ENCODE measurements at regions of chr5 and their contacts with region 1.

Region 1: GRCh38 chr5:33440482-33441240 is at the start of gene TARS1:
- DNase-seq: peak; percentile 80 to 96 (median 92)
- ATAC-seq: peak; percentile 92
- H3K4me3 ChIP-seq: peak within 1 kb of the TSS; percentile 67 to 91
- H3K4me3 Mint-ChIP-seq: no peak within 1 kb of the TSS
- H3K27ac ChIP-seq: peak within 1 kb of the TSS; percentile 72 to 78
- H3K27ac Mint-ChIP-seq: no peak within 1 kb of the TSS
- H3K4me1 ChIP-seq: peaks cover 31% of the 10 kb centered on the region
- H3K4me1 Mint-ChIP-seq: peaks cover 35% of the 10 kb centered on the region
- H3K27me3 ChIP-seq: no peaks in the 10 kb centered on the region
- H3K27me3 Mint-ChIP-seq: no peaks in the 10 kb centered on the region
- CTCF ChIP-seq: no peak
- total RNA-seq, gene TARS1: 27.9 to 31.4 TPM

Region 2: GRCh38 chr5:31531888-31532710 is 1908.6 kb before region 1 on chr5 and contains the starts of genes C5orf22 and DROSHA:
- CTCF ChIA-PET with region 1: no interaction called
- POLR2A ChIA-PET with region 1: no interaction called
- intact Hi-C with region 1: loop called (anchors 2 to 5 kb)
- DNase-seq: peak; percentile 72 to 96 (median 91)
- ATAC-seq: peak; percentile 97
- H3K4me3 ChIP-seq: peak within 1 kb of the TSS; percentile 87 to 91
- H3K4me3 Mint-ChIP-seq: peak within 1 kb of the TSS; percentile 99
- H3K27ac ChIP-seq: peak within 1 kb of the TSS; percentile 63 to 75
- H3K27ac Mint-ChIP-seq: peak within 1 kb of the TSS; percentile 92
- H3K4me1 ChIP-seq: peaks cover 34% of the 10 kb centered on the region
- H3K4me1 Mint-ChIP-seq: peaks cover 59% of the 10 kb centered on the region
- H3K27me3 ChIP-seq: no peaks in the 10 kb centered on the region
- H3K27me3 Mint-ChIP-seq: no peaks in the 10 kb centered on the region
- CTCF ChIP-seq: no peak
- total RNA-seq, gene C5orf22: 11.4 to 14.2 TPM
- total RNA-seq, gene DROSHA: 18.6 to 21.6 TPM

Region 3: GRCh38 chr5:32444431-32445286 is 996.0 kb before region 1 on chr5 and contains the start of gene ZFR:
- CTCF ChIA-PET with region 1: no interaction called
- POLR2A ChIA-PET with region 1: no interaction called
- intact Hi-C with region 1: loop called in 1 of 2 experiments (anchors 2 kb)
- DNase-seq: peak; percentile 86 to 97 (median 92)
- ATAC-seq: peak; percentile 88
- H3K4me3 ChIP-seq: peak within 1 kb of the TSS; percentile 95 to 97
- H3K4me3 Mint-ChIP-seq: peak within 1 kb of the TSS; percentile 90
- H3K27ac ChIP-seq: peak within 1 kb of the TSS; percentile 81 to 90
- H3K27ac Mint-ChIP-seq: peak within 1 kb of the TSS; percentile 95
- H3K4me1 ChIP-seq: peaks cover 30% of the 10 kb centered on the region
- H3K4me1 Mint-ChIP-seq: peaks cover 27% of the 10 kb centered on the region
- H3K27me3 ChIP-seq: no peaks in the 10 kb centered on the region
- H3K27me3 Mint-ChIP-seq: no peaks in the 10 kb centered on the region
- CTCF ChIP-seq: no peak
- total RNA-seq, gene ZFR: 54.0 to 62.9 TPM

Region 4: GRCh38 chr5:32595118-32595517 is 845.5 kb before region 1 on chr5:
- CTCF ChIA-PET with region 1: no interaction called
- POLR2A ChIA-PET with region 1: no interaction called
- intact Hi-C with region 1: loop called in 1 of 2 experiments (anchors 5 kb)
- DNase-seq: no peak
- ATAC-seq: no peak
- H3K4me3 ChIP-seq: no peak overlapping the region
- H3K4me3 Mint-ChIP-seq: no peak overlapping the region
- H3K27ac ChIP-seq: no peak overlapping the region
- H3K27ac Mint-ChIP-seq: no peak overlapping the region
- H3K4me1 ChIP-seq: peaks cover 56% of the 10 kb centered on the region
- H3K4me1 Mint-ChIP-seq: peaks cover 72% of the 10 kb centered on the region
- H3K27me3 ChIP-seq: no peaks in the 10 kb centered on the region
- H3K27me3 Mint-ChIP-seq: no peaks in the 10 kb centered on the region
- CTCF ChIP-seq: no peak

Region 5: GRCh38 chr5:33241802-33242201 is 198.9 kb before region 1 on chr5:
- CTCF ChIA-PET with region 1: no interaction called
- POLR2A ChIA-PET with region 1: no interaction called
- intact Hi-C with region 1: no loop called
- DNase-seq: no peak
- ATAC-seq: no peak
- H3K4me3 ChIP-seq: no peak overlapping the region
- H3K4me3 Mint-ChIP-seq: no peak overlapping the region
- H3K27ac ChIP-seq: no peak overlapping the region
- H3K27ac Mint-ChIP-seq: no peak overlapping the region
- H3K4me1 ChIP-seq: no peaks in the 10 kb centered on the region
- H3K4me1 Mint-ChIP-seq: peaks cover 4% of the 10 kb centered on the region
- H3K27me3 ChIP-seq: no peaks in the 10 kb centered on the region
- H3K27me3 Mint-ChIP-seq: no peaks in the 10 kb centered on the region
- CTCF ChIP-seq: no peak

Region 6: DNA sequence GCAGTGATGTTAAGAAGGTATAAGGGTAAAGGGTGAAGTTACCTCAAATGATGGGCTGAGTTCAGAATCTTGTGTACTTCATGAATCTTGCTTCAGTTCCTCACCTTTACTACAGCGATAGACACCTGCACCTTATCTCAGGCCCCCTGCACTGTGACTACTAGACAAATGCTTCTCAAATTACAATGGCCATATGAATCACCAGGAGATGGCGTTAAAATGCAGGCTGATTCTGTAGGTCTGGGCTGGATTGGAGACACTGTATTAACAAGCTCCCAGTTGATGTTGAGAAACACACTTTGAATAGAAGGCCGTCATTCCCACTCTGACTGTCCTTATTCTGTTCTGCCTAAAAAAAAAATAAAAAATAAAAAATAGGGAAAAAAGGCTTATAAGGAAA is 29.9 kb after region 1 on chr5:
- CTCF ChIA-PET with region 1: no interaction called
- POLR2A ChIA-PET with region 1: no interaction called
- intact Hi-C with region 1: no loop called
- DNase-seq: no peak
- ATAC-seq: no peak
- H3K4me3 ChIP-seq: no peak overlapping the region
- H3K4me3 Mint-ChIP-seq: no peak overlapping the region
- H3K27ac ChIP-seq: no peak overlapping the region
- H3K27ac Mint-ChIP-seq: no peak overlapping the region
- H3K4me1 ChIP-seq: no peaks in the 10 kb centered on the region
- H3K4me1 Mint-ChIP-seq: no peaks in the 10 kb centered on the region
- H3K27me3 ChIP-seq: no peaks in the 10 kb centered on the region
- H3K27me3 Mint-ChIP-seq: no peaks in the 10 kb centered on the region
- CTCF ChIP-seq: no peak

Region 7: GRCh38 chr5:33595308-33595707 is 154.6 kb after region 1 on chr5:
- CTCF ChIA-PET with region 1: no interaction called
- POLR2A ChIA-PET with region 1: no interaction called
- intact Hi-C with region 1: loop called in 1 of 2 experiments (anchors 10 kb)
- DNase-seq: no peak
- ATAC-seq: no peak
- H3K4me3 ChIP-seq: no peak overlapping the region
- H3K4me3 Mint-ChIP-seq: no peak overlapping the region
- H3K27ac ChIP-seq: no peak overlapping the region
- H3K27ac Mint-ChIP-seq: no peak overlapping the region
- H3K4me1 ChIP-seq: no peaks in the 10 kb centered on the region
- H3K4me1 Mint-ChIP-seq: no peaks in the 10 kb centered on the region
- H3K27me3 ChIP-seq: no peaks in the 10 kb centered on the region
- H3K27me3 Mint-ChIP-seq: peaks cover 12% of the 10 kb centered on the region
- CTCF ChIP-seq: no peak

Region 8: DNA sequence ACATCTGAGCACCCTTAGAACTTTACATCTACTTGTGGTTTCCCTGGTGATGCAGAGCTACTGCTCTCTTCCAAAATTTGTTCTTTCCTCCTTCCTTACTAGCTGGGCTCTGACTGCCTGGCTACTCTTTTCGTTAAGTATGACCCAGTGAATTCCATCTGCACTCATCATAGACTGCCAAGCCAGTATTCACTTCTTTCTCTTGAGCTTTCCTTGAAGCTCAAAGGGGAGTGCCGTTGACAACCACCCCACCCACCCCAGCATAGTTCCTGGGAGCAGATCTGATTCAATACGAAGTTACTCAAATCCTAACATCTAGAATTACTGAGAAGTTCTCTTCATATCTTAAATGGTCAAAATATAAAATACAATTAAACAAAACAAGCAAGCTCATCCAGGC is 260.6 kb after region 1 on chr5:
- CTCF ChIA-PET with region 1: no interaction called
- POLR2A ChIA-PET with region 1: no interaction called
- intact Hi-C with region 1: no loop called
- DNase-seq: no peak
- ATAC-seq: no peak
- H3K4me3 ChIP-seq: no peak overlapping the region
- H3K4me3 Mint-ChIP-seq: no peak overlapping the region
- H3K27ac ChIP-seq: no peak overlapping the region
- H3K27ac Mint-ChIP-seq: no peak overlapping the region
- H3K4me1 ChIP-seq: no peaks in the 10 kb centered on the region
- H3K4me1 Mint-ChIP-seq: no peaks in the 10 kb centered on the region
- H3K27me3 ChIP-seq: no peaks in the 10 kb centered on the region
- H3K27me3 Mint-ChIP-seq: no peaks in the 10 kb centered on the region
- CTCF ChIP-seq: no peak

Region 9: GRCh38 chr5:33969572-33970452 is 529.2 kb after region 1 on chr5:
- CTCF ChIA-PET with region 1: interaction called, 21 read pairs
- POLR2A ChIA-PET with region 1: no interaction called
- intact Hi-C with region 1: loop called in 1 of 2 experiments (anchors 1 kb)
- DNase-seq: peak in 2 of 9 experiments; percentile 13 to 36
- ATAC-seq: no peak
- H3K4me3 ChIP-seq: no peak overlapping the region
- H3K4me3 Mint-ChIP-seq: no peak overlapping the region
- H3K27ac ChIP-seq: no peak overlapping the region
- H3K27ac Mint-ChIP-seq: no peak overlapping the region
- H3K4me1 ChIP-seq: no peaks in the 10 kb centered on the region
- H3K4me1 Mint-ChIP-seq: peaks cover 7% of the 10 kb centered on the region
- H3K27me3 ChIP-seq: no peaks in the 10 kb centered on the region
- H3K27me3 Mint-ChIP-seq: peaks cover under 1% of the 10 kb centered on the region
- CTCF ChIP-seq: peak; percentile 49

Region 10: DNA sequence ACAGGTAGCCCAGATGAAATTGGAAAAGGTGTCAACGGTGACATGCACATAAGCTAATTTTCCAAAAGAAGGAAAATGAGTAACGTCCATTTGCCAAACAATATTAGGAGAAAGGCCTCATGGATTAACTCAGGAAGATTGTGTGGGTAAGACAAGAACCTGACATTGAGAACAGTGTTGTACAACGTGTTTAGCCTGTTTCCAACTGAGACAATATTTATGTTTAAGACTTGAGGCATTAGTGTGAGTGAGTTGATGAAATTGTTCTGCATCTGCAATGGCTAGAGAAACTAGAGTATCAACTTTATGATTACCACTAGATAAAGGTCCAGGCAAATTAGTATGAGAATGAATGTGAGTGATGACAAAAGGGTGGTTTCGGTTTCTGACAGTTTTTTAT is 1024.2 kb after region 1 on chr5:
- CTCF ChIA-PET with region 1: no interaction called
- POLR2A ChIA-PET with region 1: no interaction called
- intact Hi-C with region 1: loop called in 1 of 2 experiments (anchors 5 kb)
- DNase-seq: no peak
- ATAC-seq: no peak
- H3K4me3 ChIP-seq: no peak overlapping the region
- H3K4me3 Mint-ChIP-seq: no peak overlapping the region
- H3K27ac ChIP-seq: no peak overlapping the region
- H3K27ac Mint-ChIP-seq: no peak overlapping the region
- H3K4me1 ChIP-seq: no peaks in the 10 kb centered on the region
- H3K4me1 Mint-ChIP-seq: no peaks in the 10 kb centered on the region
- H3K27me3 ChIP-seq: no peaks in the 10 kb centered on the region
- H3K27me3 Mint-ChIP-seq: peaks cover 9% of the 10 kb centered on the region
- CTCF ChIP-seq: no peak